Colonic mucosa (tissue), 4 donors: ENCODE measurements at regions of chr16 and their contacts with region 1.

Region 1: GRCh38 chr16:67428146-67428731 is 2.7 kb upstream of the HSD11B2 start:
- DNase-seq: peak; percentile 81
- H3K4me3 ChIP-seq: no peak overlapping the region
- H3K27ac ChIP-seq: peak overlapping the region; percentile 87
- H3K4me1 ChIP-seq: peaks cover 3% of the 10 kb centered on the region
- H3K27me3 ChIP-seq: no peaks in the 10 kb centered on the region
- CTCF ChIP-seq: peak; percentile 75

Region 2: GRCh38 chr16:67339453-67339852 is 88.8 kb before region 1 on chr16:
- intact Hi-C with region 1: no loop called
- DNase-seq: no peak
- H3K4me3 ChIP-seq: no peak overlapping the region
- H3K27ac ChIP-seq: no peak overlapping the region
- H3K4me1 ChIP-seq: no peaks in the 10 kb centered on the region
- H3K27me3 ChIP-seq: no peaks in the 10 kb centered on the region
- CTCF ChIP-seq: no peak

Region 3: GRCh38 chr16:67464565-67464964 is 36.3 kb after region 1 on chr16:
- intact Hi-C with region 1: loop called (anchors 2 kb)
- DNase-seq: no peak
- H3K4me3 ChIP-seq: no peak overlapping the region
- H3K27ac ChIP-seq: peak overlapping the region; percentile 92
- H3K4me1 ChIP-seq: peaks cover 31% of the 10 kb centered on the region
- H3K27me3 ChIP-seq: no peaks in the 10 kb centered on the region
- CTCF ChIP-seq: no peak